ENCODE measurements at regions of chr17 and their contacts with region 1.

Region 1: DNA sequence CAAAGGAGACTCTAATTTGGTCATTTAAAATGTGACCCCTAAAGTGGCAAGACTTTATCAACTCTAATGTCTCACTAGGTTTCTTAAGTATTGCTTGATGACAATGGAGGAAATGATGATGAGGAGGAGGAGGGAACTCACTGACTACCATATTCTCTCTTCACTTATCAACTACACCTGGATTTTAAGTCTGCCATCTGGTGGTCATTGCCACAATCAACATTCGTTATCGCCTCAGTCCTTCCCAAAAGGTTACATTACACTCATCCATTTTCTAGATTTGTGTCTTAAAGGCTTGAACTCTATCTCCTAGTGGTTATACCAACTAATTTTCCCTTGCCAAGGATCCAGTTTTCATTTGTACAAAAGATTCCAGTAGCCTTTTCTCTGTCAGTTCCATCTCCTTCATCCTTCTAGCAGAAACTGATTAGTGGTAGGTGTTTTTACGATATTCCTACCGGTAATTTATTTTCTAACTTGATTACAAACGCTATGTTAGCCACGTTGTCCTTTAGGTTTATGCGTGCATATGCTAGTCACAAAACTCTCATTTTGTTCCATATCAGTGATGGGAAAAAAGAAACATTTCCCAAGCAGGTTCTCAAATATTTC is 114.6 kb upstream of the NOG start:
- DNase-seq: no peak
- H3K4me3 Mint-ChIP-seq: no peak overlapping the region
- H3K27ac Mint-ChIP-seq: no peak overlapping the region
- H3K4me1 Mint-ChIP-seq: no peaks in the 10 kb centered on the region
- H3K27me3 Mint-ChIP-seq: peaks cover 23% of the 10 kb centered on the region
- CTCF ChIP-seq: no peak

Region 2: GRCh38 chr17:56125830-56126819 is 352.8 kb before region 1 on chr17:
- CTCF ChIA-PET with region 1: no interaction called
- intact Hi-C with region 1: loop called (anchors 2 kb)
- DNase-seq: peak; percentile 34
- H3K4me3 Mint-ChIP-seq: no peak overlapping the region
- H3K27ac Mint-ChIP-seq: no peak overlapping the region
- H3K4me1 Mint-ChIP-seq: no peaks in the 10 kb centered on the region
- H3K27me3 Mint-ChIP-seq: no peaks in the 10 kb centered on the region
- CTCF ChIP-seq: peak; percentile 26

Region 3: GRCh38 chr17:56521104-56521777 is 42.3 kb after region 1 on chr17:
- CTCF ChIA-PET with region 1: no interaction called
- intact Hi-C with region 1: no loop called
- DNase-seq: no peak
- H3K4me3 Mint-ChIP-seq: no peak overlapping the region
- H3K27ac Mint-ChIP-seq: no peak overlapping the region
- H3K4me1 Mint-ChIP-seq: no peaks in the 10 kb centered on the region
- H3K27me3 Mint-ChIP-seq: peaks cover 76% of the 10 kb centered on the region
- CTCF ChIP-seq: no peak

Measured in Calu3 (cell line).